Sigmoid colon (tissue), 7 donors: ENCODE measurements at regions of chrX and their contacts with region 1.

Region 1: DNA sequence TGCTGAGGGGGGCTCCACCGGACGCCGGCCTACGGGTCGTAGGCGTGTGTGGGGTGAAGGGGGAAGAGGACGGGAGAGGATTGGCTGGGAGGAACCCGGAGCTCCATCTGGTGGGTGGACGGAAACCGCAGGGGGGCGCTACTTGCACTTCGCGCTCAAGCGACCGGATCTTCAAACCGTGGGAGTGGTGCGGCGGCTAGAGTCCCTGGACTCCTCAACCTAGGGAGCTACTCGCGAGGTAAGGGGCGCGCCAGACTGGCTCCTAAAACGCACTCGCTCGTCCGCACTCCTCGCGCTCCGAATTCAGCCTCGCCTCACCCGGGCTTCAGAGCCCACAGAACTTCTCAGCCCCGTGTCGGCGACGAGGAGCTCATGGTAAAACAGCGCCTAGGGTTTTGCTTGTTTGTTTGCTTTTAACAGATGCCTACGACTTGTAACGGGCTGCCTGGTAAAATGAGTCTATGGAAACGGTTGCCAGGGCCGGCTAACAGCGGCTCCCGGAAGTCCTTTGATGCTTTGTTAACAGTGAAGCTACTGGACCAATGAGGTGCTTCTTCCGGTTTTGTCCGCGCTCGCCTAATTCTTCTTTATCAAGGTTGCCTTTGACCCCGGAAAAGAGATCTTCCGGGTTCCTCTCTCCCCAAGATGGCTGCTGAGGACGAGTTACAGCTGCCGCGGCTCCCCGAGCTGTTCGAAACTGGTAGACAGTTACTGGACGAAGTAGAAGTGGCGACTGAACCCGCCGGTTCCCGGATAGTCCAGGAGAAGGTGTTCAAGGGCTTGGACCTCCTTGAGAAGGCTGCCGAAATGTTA is at the start of gene IGBP1:
- DNase-seq: peak; percentile 89
- H3K4me3 ChIP-seq: peak within 1 kb of the TSS; percentile 62 to 78 (median 69)
- H3K27ac ChIP-seq: peak within 1 kb of the TSS; percentile 86 to 92 (median 86)
- H3K4me1 ChIP-seq: peaks cover 0 to 21% (median 9%) of the 10 kb centered on the region in 4 donors
- H3K27me3 ChIP-seq: no peaks in the 10 kb centered on the region
- CTCF ChIP-seq: peak in 3 of 4 experiments; percentile 35 to 58 (median 42)
- EP300 ChIP-seq: no peak
- POLR2A ChIP-seq: peak; percentile 14 to 29
- total RNA-seq, gene IGBP1: 71.5 to 100 (median 85.0) TPM

Region 2: GRCh38 chrX:69615779-69616456 is 517.6 kb before region 1 on chrX and contains the start of gene EDA:
- intact Hi-C with region 1: loop called (anchors 5 kb)
- DNase-seq: peak; percentile 92
- H3K4me3 ChIP-seq: peak within 1 kb of the TSS; percentile 44 to 65 (median 62)
- H3K27ac ChIP-seq: peak within 1 kb of the TSS; percentile 42 to 72 (median 48)
- H3K4me1 ChIP-seq: peaks cover 0 to 4% (median 0%) of the 10 kb centered on the region in 4 donors
- H3K27me3 ChIP-seq: no peaks in the 10 kb centered on the region
- CTCF ChIP-seq: no peak
- EP300 ChIP-seq: no peak
- POLR2A ChIP-seq: no peak
- total RNA-seq, gene EDA: 3.6 to 6.4 (median 4.1) TPM

Region 3: GRCh38 chrX:70176938-70177533 is 43.5 kb after region 1 on chrX and contains the start of gene DGAT2L6:
- intact Hi-C with region 1: no loop called
- DNase-seq: no peak
- H3K4me3 ChIP-seq: no peak within 1 kb of the TSS
- H3K27ac ChIP-seq: no peak within 1 kb of the TSS
- H3K4me1 ChIP-seq: no peaks in the 10 kb centered on the region
- H3K27me3 ChIP-seq: no peaks in the 10 kb centered on the region
- CTCF ChIP-seq: no peak
- EP300 ChIP-seq: no peak
- POLR2A ChIP-seq: no peak
- total RNA-seq, gene DGAT2L6: not detected

Region 4: DNA sequence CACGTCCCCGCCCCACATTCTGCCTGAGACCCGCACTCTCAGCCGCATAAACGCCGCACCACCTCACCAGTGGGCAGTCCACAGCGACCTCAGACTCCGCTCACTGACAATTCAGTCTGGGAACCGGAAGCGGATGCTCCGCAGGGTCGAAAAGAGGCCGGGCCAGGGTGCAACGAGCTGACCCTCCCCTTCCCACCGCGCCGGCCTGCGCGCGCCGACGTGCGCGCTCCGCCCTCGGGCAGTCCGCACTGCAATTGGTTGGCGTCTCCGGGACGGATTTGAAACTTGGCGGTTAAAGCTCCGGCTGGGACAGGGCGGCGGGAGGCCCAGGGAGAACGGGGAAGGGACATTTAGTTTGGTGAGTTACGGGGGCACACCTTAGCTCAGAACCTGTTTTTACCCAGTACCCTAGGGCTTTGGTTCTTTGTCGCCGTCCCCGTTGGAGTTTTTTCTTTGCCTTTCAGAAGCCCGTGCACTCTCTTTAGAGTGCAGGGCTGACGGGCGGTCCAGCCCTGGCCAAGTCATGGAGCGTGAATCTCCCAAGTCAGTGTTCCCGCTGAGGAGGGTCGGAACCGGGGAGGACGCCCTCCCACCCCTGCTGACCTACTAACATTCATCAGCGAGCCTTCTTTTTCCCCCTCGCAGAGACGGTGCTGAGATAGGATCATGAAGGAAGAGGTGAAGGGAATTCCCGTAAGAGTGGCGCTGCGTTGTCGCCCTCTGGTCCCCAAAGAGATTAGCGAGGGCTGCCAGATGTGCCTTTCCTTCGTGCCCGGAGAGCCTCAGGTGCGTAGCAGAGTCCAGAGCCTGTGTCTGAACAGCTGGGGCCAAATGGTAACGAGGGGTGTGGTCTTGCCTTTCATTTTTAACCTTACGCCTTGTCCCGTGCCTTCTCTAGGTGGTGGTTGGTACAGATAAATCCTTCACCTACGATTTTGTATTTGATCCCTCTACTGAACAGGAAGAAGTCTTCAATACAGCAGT is 156.6 kb after region 1 on chrX and contains the starts of genes KIF4A and PDZD11:
- intact Hi-C with region 1: loop called (anchors 10 kb)
- DNase-seq: peak; percentile 85
- H3K4me3 ChIP-seq: peak within 1 kb of the TSS; percentile 31 to 53 (median 48)
- H3K27ac ChIP-seq: peak within 1 kb of the TSS; percentile 68 to 78 (median 74)
- H3K4me1 ChIP-seq: peaks cover 0 to 8% (median 6%) of the 10 kb centered on the region in 4 donors
- H3K27me3 ChIP-seq: no peaks in the 10 kb centered on the region
- CTCF ChIP-seq: no peak
- EP300 ChIP-seq: no peak
- POLR2A ChIP-seq: peak in 1 of 2 donors; percentile 13
- total RNA-seq, gene KIF4A: 0.16 to 0.55 (median 0.45) TPM
- total RNA-seq, gene PDZD11: 21.2 to 32.8 (median 25.6) TPM

Region 5: DNA sequence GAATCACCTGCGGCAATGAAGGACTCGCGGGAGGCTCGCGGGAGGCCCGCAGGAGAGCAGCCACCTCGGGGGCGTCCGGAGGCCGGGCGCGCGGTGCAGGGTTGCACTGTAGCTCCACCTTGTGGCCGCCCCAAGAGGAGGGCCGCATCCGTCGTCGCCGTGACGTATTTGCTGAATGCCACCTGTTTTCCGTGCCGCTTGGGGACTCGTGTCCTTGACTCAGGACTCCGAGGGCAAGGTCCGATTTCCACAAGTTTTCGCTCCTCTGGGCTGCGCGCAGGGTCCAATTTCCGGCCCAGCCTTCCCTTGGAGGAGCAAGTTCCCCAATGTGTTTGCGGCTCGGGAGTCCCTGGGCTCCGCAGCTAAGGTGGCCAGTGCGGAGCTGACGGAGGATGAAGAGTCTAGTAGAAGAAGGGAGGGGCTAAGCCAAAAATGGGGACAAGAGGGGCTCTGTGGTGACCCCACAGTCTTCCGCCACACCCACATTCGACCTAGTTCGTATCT is 300.4 kb after region 1 on chrX:
- intact Hi-C with region 1: loop called (anchors 10 kb)
- DNase-seq: peak; percentile 85
- H3K4me3 ChIP-seq: peak overlapping the region; percentile 53 to 62 (median 58)
- H3K27ac ChIP-seq: peak overlapping the region; percentile 75 to 80 (median 78)
- H3K4me1 ChIP-seq: peaks cover 0 to 8% (median 2%) of the 10 kb centered on the region in 4 donors
- H3K27me3 ChIP-seq: no peaks in the 10 kb centered on the region
- CTCF ChIP-seq: peak; percentile 33 to 73 (median 50)
- EP300 ChIP-seq: no peak
- POLR2A ChIP-seq: no peak